CD4-positive, alpha-beta memory T cell (primary cell): ENCODE measurements at regions of chr14 and their contacts with region 1.

Region 1: GRCh38 chr14:24108336-24108874 is 6.2 kb upstream of the DCAF11 start:
- DNase-seq: no peak
- H3K4me3 ChIP-seq: no peak overlapping the region
- H3K4me3 Mint-ChIP-seq: peak overlapping the region in 4 of 8 donors; percentile 30 to 64 (median 44)
- H3K27ac ChIP-seq: peak overlapping the region; percentile 45
- H3K27ac Mint-ChIP-seq: peak overlapping the region; percentile 82 to 96 (median 95)
- H3K4me1 ChIP-seq: peaks cover 18% of the 10 kb centered on the region
- H3K4me1 Mint-ChIP-seq: peaks cover 6 to 15% (median 12%) of the 10 kb centered on the region in 4 donors
- H3K27me3 ChIP-seq: no peaks in the 10 kb centered on the region
- H3K27me3 Mint-ChIP-seq: no peaks in the 10 kb centered on the region

Region 2: DNA sequence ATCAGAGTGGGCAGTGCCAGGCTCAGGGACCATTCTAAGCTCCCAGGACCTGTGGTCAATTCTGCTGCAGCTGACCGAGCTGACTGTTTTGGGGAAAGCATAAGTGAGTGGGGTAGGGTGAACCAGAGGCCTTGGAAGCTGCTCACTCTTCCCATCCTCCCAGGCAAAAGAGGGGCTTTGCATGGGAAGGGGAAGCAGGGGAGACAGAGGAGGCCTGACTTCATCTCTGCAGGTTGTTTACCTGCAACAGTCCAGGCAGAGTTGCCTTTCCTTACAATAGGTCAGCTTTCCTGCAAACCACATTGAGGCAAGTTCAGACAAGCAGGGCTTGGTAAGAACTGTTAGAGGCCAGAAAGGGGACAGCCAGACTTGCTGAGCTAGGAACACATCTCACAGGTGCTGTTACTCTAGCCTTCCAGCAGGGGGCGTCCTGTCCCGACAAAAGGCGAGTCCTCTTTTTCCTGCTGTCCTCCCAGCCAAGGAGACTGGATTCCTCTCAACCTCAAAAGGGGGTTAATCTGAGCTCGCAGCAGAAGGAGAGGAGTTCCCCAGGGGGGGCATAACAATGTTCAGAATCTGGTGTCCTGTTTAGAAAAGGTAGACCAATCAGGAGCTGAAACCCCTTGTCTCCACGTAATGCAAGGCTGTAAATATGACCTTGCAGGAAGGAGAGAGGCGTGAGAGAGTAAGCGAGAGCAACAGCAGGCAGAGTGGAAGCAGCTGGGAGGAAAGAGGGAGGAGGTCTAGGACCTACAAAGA is 476.5 kb before region 1 on chr14:
- CTCF ChIA-PET with region 1: no interaction called
- POLR2A ChIA-PET with region 1: no interaction called
- intact Hi-C with region 1: no loop called
- DNase-seq: peak; percentile 59 to 75 (median 69)
- H3K4me3 ChIP-seq: peak overlapping the region in 1 of 2 donors; percentile 20
- H3K4me3 Mint-ChIP-seq: peak overlapping the region; percentile 8 to 87 (median 66)
- H3K27ac ChIP-seq: no peak overlapping the region
- H3K27ac Mint-ChIP-seq: peak overlapping the region in 5 of 7 donors; percentile 13 to 59 (median 38)
- H3K4me1 ChIP-seq: peaks cover 5% of the 10 kb centered on the region
- H3K4me1 Mint-ChIP-seq: peaks cover 5 to 12% (median 6%) of the 10 kb centered on the region in 4 donors
- H3K27me3 ChIP-seq: no peaks in the 10 kb centered on the region
- H3K27me3 Mint-ChIP-seq: peaks cover 0 to 2% of the 10 kb centered on the region in 2 donors

Region 3: DNA sequence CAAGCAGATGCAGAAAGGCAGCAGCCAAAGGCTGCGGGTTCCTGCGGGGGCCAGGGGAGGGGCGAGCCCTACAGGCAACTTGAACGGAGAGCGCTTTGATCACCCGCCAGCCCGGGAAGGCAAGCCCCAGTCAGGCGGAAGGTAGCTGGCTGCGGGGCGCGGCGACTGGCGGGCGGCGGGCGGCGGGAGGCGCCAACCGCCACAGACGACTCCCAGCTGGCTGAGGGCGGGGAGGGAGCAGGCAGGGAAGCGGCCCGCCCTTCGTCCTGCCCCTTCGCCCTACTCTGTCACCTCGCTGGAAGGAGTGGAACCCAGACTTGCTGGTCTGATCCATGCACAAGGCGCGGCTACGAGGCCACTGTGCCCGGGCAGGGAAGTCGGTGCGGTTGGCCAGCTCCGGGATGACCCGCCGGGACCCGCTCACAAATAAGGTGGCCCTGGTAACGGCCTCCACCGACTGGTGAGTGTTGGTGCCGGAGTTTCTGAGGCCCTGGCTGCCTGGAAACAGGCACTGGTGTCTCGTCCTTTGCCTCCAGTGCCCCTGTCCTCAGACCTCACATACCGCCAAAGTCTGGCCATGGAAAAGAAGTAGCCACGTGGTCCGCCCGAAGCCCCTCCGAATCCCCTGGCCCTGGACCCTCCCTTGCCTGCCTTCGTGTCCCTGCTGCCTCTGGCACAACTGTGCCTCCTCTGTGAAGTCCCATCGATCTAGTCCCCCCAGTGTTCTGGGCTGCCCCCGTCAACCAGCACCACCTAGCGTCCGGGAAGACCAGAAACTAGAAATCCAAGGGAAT is 72.0 kb before region 1 on chr14:
- CTCF ChIA-PET with region 1: interaction called, 4 read pairs
- POLR2A ChIA-PET with region 1: no interaction called
- intact Hi-C with region 1: loop called (anchors 1 kb)
- DNase-seq: peak; percentile 53 to 77 (median 66)
- H3K4me3 ChIP-seq: peak overlapping the region; percentile 47 to 73
- H3K4me3 Mint-ChIP-seq: peak overlapping the region; percentile 87 to 100 (median 96)
- H3K27ac ChIP-seq: peak overlapping the region; percentile 67
- H3K27ac Mint-ChIP-seq: peak overlapping the region; percentile 79 to 94 (median 88)
- H3K4me1 ChIP-seq: peaks cover 3% of the 10 kb centered on the region
- H3K4me1 Mint-ChIP-seq: peaks cover 5 to 15% (median 8%) of the 10 kb centered on the region in 4 donors
- H3K27me3 ChIP-seq: no peaks in the 10 kb centered on the region
- H3K27me3 Mint-ChIP-seq: no peaks in the 10 kb centered on the region

Region 4: GRCh38 chr14:24080888-24081738 is 27.3 kb before region 1 on chr14:
- CTCF ChIA-PET with region 1: interaction called, 85 read pairs
- POLR2A ChIA-PET with region 1: interaction called, 51 read pairs
- intact Hi-C with region 1: no loop called
- DNase-seq: peak; percentile 64 to 77 (median 67)
- H3K4me3 ChIP-seq: peak overlapping the region; percentile 39 to 60
- H3K4me3 Mint-ChIP-seq: peak overlapping the region; percentile 81 to 90 (median 87)
- H3K27ac ChIP-seq: peak overlapping the region; percentile 50
- H3K27ac Mint-ChIP-seq: peak overlapping the region; percentile 64 to 92 (median 88)
- H3K4me1 ChIP-seq: peaks cover 14% of the 10 kb centered on the region
- H3K4me1 Mint-ChIP-seq: peaks cover 10 to 27% (median 15%) of the 10 kb centered on the region in 4 donors
- H3K27me3 ChIP-seq: no peaks in the 10 kb centered on the region
- H3K27me3 Mint-ChIP-seq: no peaks in the 10 kb centered on the region

Region 5: GRCh38 chr14:24135834-24136542 is 27.6 kb after region 1 on chr14 and contains the start of gene PSME1:
- CTCF ChIA-PET with region 1: interaction called, 23 read pairs
- POLR2A ChIA-PET with region 1: interaction called, 347 read pairs
- intact Hi-C with region 1: no loop called
- DNase-seq: peak; percentile 92 to 94 (median 93)
- H3K4me3 ChIP-seq: peak within 1 kb of the TSS; percentile 30 to 87
- H3K4me3 Mint-ChIP-seq: peak within 1 kb of the TSS; percentile 87 to 94 (median 92)
- H3K27ac ChIP-seq: peak within 1 kb of the TSS; percentile 84
- H3K27ac Mint-ChIP-seq: peak within 1 kb of the TSS; percentile 88 to 96 (median 94)
- H3K4me1 ChIP-seq: peaks cover 59% of the 10 kb centered on the region
- H3K4me1 Mint-ChIP-seq: peaks cover 35 to 70% (median 55%) of the 10 kb centered on the region in 4 donors
- H3K27me3 ChIP-seq: no peaks in the 10 kb centered on the region
- H3K27me3 Mint-ChIP-seq: no peaks in the 10 kb centered on the region
- total RNA-seq, gene PSME1: 257 to 273 TPM

Region 6: DNA sequence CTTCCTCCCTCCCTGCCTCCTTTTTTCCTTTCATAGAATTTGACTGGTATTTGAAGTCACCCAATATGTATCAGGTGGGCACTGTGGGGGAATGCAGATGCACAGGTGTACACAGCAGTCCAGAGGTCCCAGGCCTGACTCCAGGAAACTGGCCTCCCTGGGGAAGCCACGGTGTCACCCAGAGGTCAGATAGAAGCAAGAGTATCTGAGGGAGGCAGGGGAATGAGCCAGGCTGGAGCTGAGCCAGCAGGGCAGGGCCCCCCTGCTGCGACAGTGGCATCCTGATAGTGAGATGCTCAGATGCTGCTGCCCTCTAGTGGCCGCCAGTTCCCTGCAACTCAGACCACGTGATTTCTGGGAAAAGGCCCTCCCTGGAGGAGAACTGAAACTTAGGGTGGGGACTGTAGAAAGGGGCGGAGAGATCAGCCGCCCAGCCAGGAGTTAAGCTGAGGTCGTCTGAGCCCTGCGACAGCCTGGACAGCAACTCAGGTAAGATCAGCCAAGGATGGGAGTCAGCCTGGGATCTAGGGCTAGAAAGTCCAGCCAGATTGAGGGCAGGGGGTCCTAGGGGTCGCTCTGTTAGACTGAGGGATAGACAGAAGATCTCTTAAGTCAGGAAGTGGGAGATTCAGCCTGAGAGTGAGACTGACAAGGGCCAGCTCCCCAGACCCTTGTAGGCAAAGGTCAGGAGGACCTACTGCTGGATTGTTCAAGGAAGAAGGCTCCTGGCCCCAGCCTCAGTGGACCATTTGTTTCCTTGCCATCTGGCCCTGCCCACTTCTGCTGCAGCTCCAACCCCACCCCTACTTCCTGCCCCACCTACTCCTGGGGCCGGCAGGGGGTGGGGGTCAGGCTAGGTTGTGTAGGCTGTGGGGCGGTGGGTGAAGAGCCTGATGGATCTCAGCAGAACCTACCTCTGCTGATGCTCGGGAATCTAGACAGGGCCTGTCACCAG is 52.7 kb after region 1 on chr14 and contains the start of gene IRF9:
- CTCF ChIA-PET with region 1: interaction called, 63 read pairs
- POLR2A ChIA-PET with region 1: interaction called, 80 read pairs
- intact Hi-C with region 1: loop called (anchors 1 kb)
- DNase-seq: peak; percentile 94 to 97 (median 95)
- H3K4me3 ChIP-seq: peak within 1 kb of the TSS; percentile 73 to 97
- H3K4me3 Mint-ChIP-seq: peak within 1 kb of the TSS; percentile 96 to 100 (median 99)
- H3K27ac ChIP-seq: peak within 1 kb of the TSS; percentile 90
- H3K27ac Mint-ChIP-seq: peak within 1 kb of the TSS; percentile 97 to 100 (median 99)
- H3K4me1 ChIP-seq: peaks cover 50% of the 10 kb centered on the region
- H3K4me1 Mint-ChIP-seq: peaks cover 29 to 60% (median 48%) of the 10 kb centered on the region in 4 donors
- H3K27me3 ChIP-seq: no peaks in the 10 kb centered on the region
- H3K27me3 Mint-ChIP-seq: no peaks in the 10 kb centered on the region
- total RNA-seq, gene IRF9: 154 to 157 TPM

Region 7: GRCh38 chr14:24262821-24263761 is 154.7 kb after region 1 on chr14 and contains the start of gene TGM1:
- CTCF ChIA-PET with region 1: no interaction called
- POLR2A ChIA-PET with region 1: no interaction called
- intact Hi-C with region 1: no loop called
- DNase-seq: no peak
- H3K4me3 ChIP-seq: no peak within 1 kb of the TSS
- H3K4me3 Mint-ChIP-seq: no peak within 1 kb of the TSS
- H3K27ac ChIP-seq: no peak within 1 kb of the TSS
- H3K27ac Mint-ChIP-seq: peak within 1 kb of the TSS in 3 of 7 donors; percentile 8 to 46 (median 37)
- H3K4me1 ChIP-seq: no peaks in the 10 kb centered on the region
- H3K4me1 Mint-ChIP-seq: peaks cover 0 to 5% (median 0%) of the 10 kb centered on the region in 4 donors
- H3K27me3 ChIP-seq: no peaks in the 10 kb centered on the region
- H3K27me3 Mint-ChIP-seq: no peaks in the 10 kb centered on the region
- total RNA-seq, gene TGM1: 11.0 to 16.1 TPM

Region 8: DNA sequence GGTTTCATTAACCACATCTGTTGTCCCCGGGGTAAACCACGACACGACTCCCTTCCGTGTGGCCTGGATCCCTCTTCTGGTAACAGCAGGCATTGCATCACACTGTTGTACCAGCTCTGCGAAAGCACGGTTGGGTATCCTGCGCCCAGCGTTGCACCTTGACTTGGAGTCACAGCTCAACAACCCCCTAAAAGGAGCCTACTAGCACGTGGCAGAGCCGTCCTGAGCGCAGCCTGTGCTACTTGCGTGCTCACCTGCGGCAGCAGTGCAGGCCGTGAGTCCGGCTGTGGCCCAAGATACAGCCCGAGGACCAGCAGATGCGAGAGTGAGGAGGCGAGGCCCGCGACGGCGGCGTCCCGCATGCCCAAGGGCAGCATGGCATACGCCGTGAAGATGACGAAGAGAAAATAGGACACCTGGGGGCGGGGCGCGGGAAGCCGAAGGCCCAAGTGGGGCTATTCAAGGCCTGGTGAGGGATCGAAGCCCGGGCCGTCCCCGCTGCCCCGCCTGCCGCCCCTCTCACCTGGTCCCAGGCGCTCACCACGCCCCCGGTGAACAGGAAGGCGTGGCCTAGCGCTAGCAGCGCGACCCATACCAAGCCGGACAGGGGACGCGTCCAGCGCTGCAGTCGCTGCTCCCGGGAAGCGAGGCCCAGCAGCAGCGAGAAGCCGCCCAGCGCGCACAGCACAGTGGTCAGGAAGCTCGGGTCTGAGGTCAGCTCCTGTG is 224.0 kb after region 1 on chr14:
- CTCF ChIA-PET with region 1: interaction called, 11 read pairs
- POLR2A ChIA-PET with region 1: no interaction called
- intact Hi-C with region 1: no loop called
- DNase-seq: peak; percentile 89 to 92 (median 90)
- H3K4me3 ChIP-seq: peak overlapping the region; percentile 24 to 51
- H3K4me3 Mint-ChIP-seq: peak overlapping the region; percentile 76 to 93 (median 87)
- H3K27ac ChIP-seq: no peak overlapping the region
- H3K27ac Mint-ChIP-seq: peak overlapping the region; percentile 65 to 98 (median 86)
- H3K4me1 ChIP-seq: peaks cover 64% of the 10 kb centered on the region
- H3K4me1 Mint-ChIP-seq: peaks cover 40 to 91% (median 59%) of the 10 kb centered on the region in 4 donors
- H3K27me3 ChIP-seq: peaks cover 11% of the 10 kb centered on the region
- H3K27me3 Mint-ChIP-seq: peaks cover 6 to 13% of the 10 kb centered on the region in 2 donors